MCF 10A (cell line): ENCODE measurements at regions of chr17 and their contacts with region 1.

Region 1: GRCh38 chr17:80866147-80866793 is 125.4 kb upstream of the CHMP6 start:
- DNase-seq: peak; percentile 76
- H3K4me3 Mint-ChIP-seq: no peak overlapping the region
- H3K27ac Mint-ChIP-seq: no peak overlapping the region
- H3K4me1 Mint-ChIP-seq: peaks cover 6% of the 10 kb centered on the region
- H3K27me3 Mint-ChIP-seq: no peaks in the 10 kb centered on the region
- CTCF ChIP-seq: peak; percentile 54

Region 2: DNA sequence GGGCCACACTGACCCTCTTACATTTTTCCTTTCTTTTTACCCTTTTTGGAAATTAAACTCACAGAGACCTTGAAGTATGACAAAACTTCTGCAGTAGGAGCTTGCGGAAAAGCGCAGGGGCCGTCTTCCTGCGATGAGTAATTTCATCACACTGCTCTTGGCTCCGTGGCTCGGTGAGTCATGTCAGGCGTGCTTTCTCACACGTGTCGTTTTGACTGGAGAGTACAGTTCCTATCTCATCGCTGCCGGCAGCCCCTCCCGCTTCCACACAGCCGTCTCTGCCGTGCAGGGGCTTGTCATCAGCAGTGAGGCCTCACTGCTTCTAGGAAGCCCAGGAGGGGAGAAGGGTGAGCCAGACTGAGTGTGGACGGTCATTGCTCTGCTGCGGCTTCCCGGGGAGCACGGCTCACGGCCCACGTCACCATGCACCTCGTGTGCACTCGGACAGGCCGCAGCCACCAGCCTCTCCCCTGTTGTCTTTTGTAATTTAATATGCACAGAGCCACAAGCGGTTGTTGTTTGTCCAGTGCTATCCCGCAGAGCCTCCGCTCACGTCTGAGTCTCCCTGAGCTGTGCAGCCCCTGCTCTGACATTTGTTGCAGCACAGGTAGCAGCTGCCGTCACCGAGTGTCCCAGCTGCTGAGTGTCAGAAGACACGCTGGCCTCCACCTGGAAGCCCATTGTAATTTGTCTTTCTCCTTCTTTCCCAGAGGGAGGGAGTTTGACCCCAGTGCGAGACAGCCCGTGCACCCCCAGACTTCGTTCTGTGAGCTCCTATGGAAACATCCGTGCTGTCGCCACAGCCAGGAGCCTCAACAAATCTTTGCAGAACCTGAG is 26.0 kb after region 1 on chr17:
- CTCF ChIA-PET with region 1: interaction called, 3 read pairs
- POLR2A ChIA-PET with region 1: interaction called, 12 read pairs
- intact Hi-C with region 1: no loop called
- DNase-seq: peak; percentile 98
- H3K4me3 Mint-ChIP-seq: peak overlapping the region; percentile 62
- H3K27ac Mint-ChIP-seq: peak overlapping the region; percentile 92
- H3K4me1 Mint-ChIP-seq: peaks cover 31% of the 10 kb centered on the region
- H3K27me3 Mint-ChIP-seq: no peaks in the 10 kb centered on the region
- CTCF ChIP-seq: peak; percentile 32

Region 3: GRCh38 chr17:80899402-80900268 is 33.4 kb after region 1 on chr17:
- CTCF ChIA-PET with region 1: interaction called, 5 read pairs
- POLR2A ChIA-PET with region 1: interaction called, 8 read pairs
- intact Hi-C with region 1: loop called (anchors 1 kb)
- DNase-seq: peak; percentile 85
- H3K4me3 Mint-ChIP-seq: peak overlapping the region; percentile 12
- H3K27ac Mint-ChIP-seq: peak overlapping the region; percentile 39
- H3K4me1 Mint-ChIP-seq: peaks cover 36% of the 10 kb centered on the region
- H3K27me3 Mint-ChIP-seq: no peaks in the 10 kb centered on the region
- CTCF ChIP-seq: peak; percentile 88

Region 4: DNA sequence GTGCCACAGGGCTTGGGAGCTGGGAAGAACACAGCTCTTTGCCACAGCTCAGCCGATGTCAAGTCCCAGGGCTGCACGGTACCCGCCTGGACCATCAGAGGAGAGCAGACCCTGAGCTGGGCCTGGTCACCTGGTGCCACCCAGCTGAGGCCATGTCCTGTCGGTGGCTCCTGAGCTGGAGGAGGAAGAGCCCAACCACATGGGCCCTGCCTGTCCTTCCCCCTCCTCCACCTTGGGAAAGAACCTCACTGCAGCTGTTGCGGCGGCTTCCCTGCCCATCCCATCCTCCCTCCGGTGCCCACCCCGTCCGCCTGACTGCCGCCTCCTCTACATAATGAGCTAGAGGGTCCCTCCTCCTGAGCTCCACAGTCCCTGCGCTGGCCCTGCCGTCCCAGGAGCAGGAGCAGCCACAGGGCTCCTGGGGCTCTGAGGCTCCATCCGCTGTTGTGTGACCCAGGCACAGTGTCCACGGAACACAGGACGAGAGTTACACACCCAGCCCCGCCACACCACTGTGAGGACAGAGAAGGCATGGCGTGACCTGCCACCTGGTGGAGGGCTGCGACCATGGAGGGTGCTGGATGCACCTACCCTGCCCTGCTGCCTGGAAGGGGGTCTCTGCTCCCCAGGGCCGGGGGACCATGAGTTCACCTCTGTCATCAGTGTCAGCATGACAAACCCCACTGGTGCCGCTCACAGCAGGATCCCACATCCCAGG is 103.9 kb after region 1 on chr17:
- CTCF ChIA-PET with region 1: interaction called, 4 read pairs
- POLR2A ChIA-PET with region 1: no interaction called
- intact Hi-C with region 1: loop called (anchors 2 kb)
- DNase-seq: peak; percentile 36
- H3K4me3 Mint-ChIP-seq: no peak overlapping the region
- H3K27ac Mint-ChIP-seq: no peak overlapping the region
- H3K4me1 Mint-ChIP-seq: no peaks in the 10 kb centered on the region
- H3K27me3 Mint-ChIP-seq: no peaks in the 10 kb centered on the region
- CTCF ChIP-seq: peak; percentile 9

Region 5: DNA sequence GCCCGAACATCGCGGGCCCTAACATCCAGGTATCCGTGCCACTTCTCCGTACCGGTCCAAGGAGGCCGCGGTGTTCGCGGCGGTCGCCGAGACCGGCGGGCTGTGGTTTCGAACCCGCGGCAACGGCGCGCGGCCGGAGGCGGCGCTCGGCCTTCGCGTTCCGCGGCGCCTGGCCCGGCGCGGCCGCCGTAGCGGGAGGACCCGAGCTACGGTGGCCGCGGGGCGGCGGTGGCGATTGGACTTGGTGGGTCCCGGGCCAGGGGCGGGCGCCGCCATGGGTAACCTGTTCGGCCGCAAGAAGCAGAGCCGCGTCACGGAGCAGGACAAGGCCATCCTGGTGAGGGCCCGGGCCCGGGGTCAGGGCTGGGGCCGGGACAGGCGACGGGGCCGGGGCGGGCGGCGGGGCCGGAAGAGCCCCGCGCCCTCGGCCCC is 125.4 kb after region 1 on chr17 and contains the start of gene CHMP6:
- CTCF ChIA-PET with region 1: no interaction called
- POLR2A ChIA-PET with region 1: no interaction called
- intact Hi-C with region 1: no loop called
- DNase-seq: peak; percentile 69
- H3K4me3 Mint-ChIP-seq: peak within 1 kb of the TSS; percentile 69
- H3K27ac Mint-ChIP-seq: peak within 1 kb of the TSS; percentile 74
- H3K4me1 Mint-ChIP-seq: no peaks in the 10 kb centered on the region
- H3K27me3 Mint-ChIP-seq: no peaks in the 10 kb centered on the region
- CTCF ChIP-seq: no peak
- total RNA-seq, gene CHMP6: 19.5 and 22.6 TPM in 2 replicates